ENCODE measurements at regions of chr16 and their contacts with region 1.

Region 1: DNA sequence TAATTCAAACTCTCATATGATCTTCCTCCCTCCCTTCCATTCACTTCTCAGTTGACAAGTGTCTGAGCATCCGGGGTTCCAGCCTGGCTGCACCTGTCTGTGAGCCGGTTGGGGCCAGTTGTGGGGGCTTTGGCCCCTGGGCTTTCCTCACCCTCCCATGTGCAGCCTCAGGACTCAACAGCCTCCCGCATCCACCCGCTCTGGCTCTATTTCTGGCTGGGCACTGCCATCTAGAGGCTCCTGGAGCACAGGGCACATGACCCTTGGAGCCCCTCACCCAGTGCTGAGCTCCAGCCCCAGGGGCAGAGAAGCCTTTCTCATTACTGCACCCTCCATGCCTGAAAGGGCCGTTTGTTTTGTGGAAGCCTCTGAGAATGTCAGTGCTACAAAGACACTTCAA is 43.3 kb downstream of the HAPSTR1 start:
- DNase-seq: peak; percentile 68
- H3K4me3 ChIP-seq: no peak overlapping the region
- H3K27ac ChIP-seq: no peak overlapping the region
- H3K4me1 ChIP-seq: no peaks in the 10 kb centered on the region
- H3K27me3 ChIP-seq: no peaks in the 10 kb centered on the region
- CTCF ChIP-seq: peak; percentile 74

Region 2: GRCh38 chr16:9199311-9199710 is 64.6 kb after region 1 on chr16:
- CTCF ChIA-PET with region 1: no interaction called
- POLR2A ChIA-PET with region 1: no interaction called
- intact Hi-C with region 1: loop called (anchors 2 kb)
- DNase-seq: peak; percentile 95
- H3K4me3 ChIP-seq: no peak overlapping the region
- H3K27ac ChIP-seq: peak overlapping the region; percentile 99
- H3K4me1 ChIP-seq: peaks cover 23% of the 10 kb centered on the region
- H3K27me3 ChIP-seq: no peaks in the 10 kb centered on the region
- CTCF ChIP-seq: no peak

Measured in A673 (cell line).